IMR-90 (cell line): ENCODE measurements at regions of chr10 and their contacts with region 1.

Region 1: GRCh38 chr10:58275908-58276307 is 6.9 kb downstream of the CISD1 start:
- DNase-seq: peak; percentile 78
- ATAC-seq: peak; percentile 88
- H3K4me3 ChIP-seq: no peak overlapping the region
- H3K27ac ChIP-seq: no peak overlapping the region; the same call in 1 of the 2 replicates
- H3K4me1 ChIP-seq: peaks cover 2% of the 10 kb centered on the region; the same call in 1 of the 2 replicates
- H3K27me3 ChIP-seq: no peaks in the 10 kb centered on the region
- CTCF ChIP-seq: no peak
- POLR2A ChIP-seq: no peak
- RAD21 ChIP-seq: no peak

Region 2: GRCh38 chr10:58143944-58144343 is 132.0 kb before region 1 on chr10:
- CTCF ChIA-PET with region 1: no interaction called
- POLR2A ChIA-PET with region 1: no interaction called
- dilution Hi-C with region 1: no loop called
- in situ Hi-C with region 1: no loop called
- intact Hi-C with region 1: no loop called
- DNase-seq: no peak
- ATAC-seq: no peak
- H3K4me3 ChIP-seq: no peak overlapping the region
- H3K27ac ChIP-seq: no peak overlapping the region
- H3K4me1 ChIP-seq: no peaks in the 10 kb centered on the region
- H3K27me3 ChIP-seq: no peaks in the 10 kb centered on the region
- CTCF ChIP-seq: no peak
- POLR2A ChIP-seq: no peak
- RAD21 ChIP-seq: no peak

Region 3: GRCh38 chr10:58189269-58189668 is 86.6 kb before region 1 on chr10:
- CTCF ChIA-PET with region 1: no interaction called
- POLR2A ChIA-PET with region 1: interaction called, 4 read pairs
- dilution Hi-C with region 1: no loop called
- in situ Hi-C with region 1: loop called (anchors 5 kb)
- intact Hi-C with region 1: no loop called
- DNase-seq: peak; percentile 76
- ATAC-seq: peak; percentile 97
- H3K4me3 ChIP-seq: no peak overlapping the region
- H3K27ac ChIP-seq: no peak overlapping the region
- H3K4me1 ChIP-seq: 0 out of 2 replicates have a peak, but pooled peaks cover 2% of the 10 kb centered on the region
- H3K27me3 ChIP-seq: no peaks in the 10 kb centered on the region
- CTCF ChIP-seq: no peak
- POLR2A ChIP-seq: no peak
- RAD21 ChIP-seq: no peak

Region 4: GRCh38 chr10:58833771-58834561 is 558.1 kb after region 1 on chr10:
- CTCF ChIA-PET with region 1: no interaction called
- POLR2A ChIA-PET with region 1: no interaction called
- dilution Hi-C with region 1: no loop called
- in situ Hi-C with region 1: no loop called
- intact Hi-C with region 1: no loop called
- DNase-seq: no peak
- ATAC-seq: no peak
- H3K4me3 ChIP-seq: no peak overlapping the region
- H3K27ac ChIP-seq: no peak overlapping the region
- H3K4me1 ChIP-seq: no peaks in the 10 kb centered on the region
- H3K27me3 ChIP-seq: no peaks in the 10 kb centered on the region
- CTCF ChIP-seq: no peak
- POLR2A ChIP-seq: no peak
- RAD21 ChIP-seq: no peak